ENCODE measurements at regions of chr11 and their contacts with region 1.

Region 1: DNA sequence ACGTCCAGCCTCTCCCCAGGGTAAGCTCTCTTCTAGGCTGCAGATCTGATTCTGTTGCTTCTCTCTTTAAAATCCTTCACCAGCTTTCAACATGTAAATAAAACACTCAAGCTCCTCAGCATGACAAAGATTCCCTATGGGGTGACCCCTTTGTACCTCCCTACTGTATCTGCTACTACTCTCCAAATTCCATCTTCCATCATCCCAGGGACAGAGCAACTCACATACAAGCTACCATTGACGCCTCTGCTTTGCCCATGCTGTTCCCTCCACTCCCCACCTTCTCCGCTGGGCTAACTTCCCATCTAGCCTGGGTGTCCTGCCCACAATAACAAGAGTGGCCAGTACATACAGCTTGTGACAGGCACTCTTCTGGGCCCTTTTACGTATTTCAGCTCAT is 207.5 kb upstream of the ZBED5 start:
- DNase-seq: no peak
- ATAC-seq: no peak
- H3K4me3 ChIP-seq: no peak overlapping the region
- H3K27ac ChIP-seq: no peak overlapping the region
- H3K4me1 ChIP-seq: no peaks in the 10 kb centered on the region
- CTCF ChIP-seq: no peak
- EP300 ChIP-seq: no peak
- POLR2A ChIP-seq: no peak
- RAD21 ChIP-seq: no peak

Region 2: DNA sequence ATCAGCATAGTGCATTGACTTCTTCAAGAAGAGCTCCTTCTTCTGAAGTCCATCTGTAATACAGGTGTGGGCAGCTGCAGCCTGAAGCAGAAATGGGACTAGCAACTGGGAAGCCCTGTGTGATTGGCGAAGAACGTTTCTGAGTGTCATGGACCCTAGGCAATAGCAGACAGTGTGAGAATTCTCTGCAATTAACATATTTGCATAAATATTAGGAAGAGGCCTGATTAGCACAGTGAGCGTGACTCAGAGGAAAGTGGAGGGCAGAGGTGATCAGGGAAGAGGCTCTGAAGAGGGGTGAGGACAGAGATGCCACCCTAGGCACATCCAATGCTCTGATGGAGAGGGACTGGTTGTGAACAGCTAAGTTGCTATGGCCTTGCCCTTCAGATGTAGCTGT is 36.4 kb before region 1 on chr11:
- CTCF ChIA-PET with region 1: no interaction called
- POLR2A ChIA-PET with region 1: no interaction called
- DNase-seq: no peak
- ATAC-seq: no peak
- H3K4me3 ChIP-seq: no peak overlapping the region
- H3K27ac ChIP-seq: no peak overlapping the region
- H3K4me1 ChIP-seq: peaks cover 13% of the 10 kb centered on the region; the same call in 2 of the 3 replicates
- CTCF ChIP-seq: no peak
- EP300 ChIP-seq: no peak
- POLR2A ChIP-seq: no peak
- RAD21 ChIP-seq: no peak

Region 3: GRCh38 chr11:11078344-11079086 is 13.1 kb after region 1 on chr11:
- CTCF ChIA-PET with region 1: interaction called, 10 read pairs
- POLR2A ChIA-PET with region 1: no interaction called
- DNase-seq: peak in 1 of 2 experiments; percentile 40
- ATAC-seq: peak in 1 of 2 experiments; percentile 72; a peak in 3 of 6 replicates
- H3K4me3 ChIP-seq: no peak overlapping the region
- H3K27ac ChIP-seq: no peak overlapping the region
- H3K4me1 ChIP-seq: no peaks in the 10 kb centered on the region
- CTCF ChIP-seq: peak; percentile 21; the same call in 1 of the 3 replicates
- EP300 ChIP-seq: no peak
- POLR2A ChIP-seq: no peak
- RAD21 ChIP-seq: peak in 1 of 2 experiments; percentile 43; a peak in 3 of 5 replicates